ENCODE measurements at regions of chr6 and their contacts with region 1.

Region 1: DNA sequence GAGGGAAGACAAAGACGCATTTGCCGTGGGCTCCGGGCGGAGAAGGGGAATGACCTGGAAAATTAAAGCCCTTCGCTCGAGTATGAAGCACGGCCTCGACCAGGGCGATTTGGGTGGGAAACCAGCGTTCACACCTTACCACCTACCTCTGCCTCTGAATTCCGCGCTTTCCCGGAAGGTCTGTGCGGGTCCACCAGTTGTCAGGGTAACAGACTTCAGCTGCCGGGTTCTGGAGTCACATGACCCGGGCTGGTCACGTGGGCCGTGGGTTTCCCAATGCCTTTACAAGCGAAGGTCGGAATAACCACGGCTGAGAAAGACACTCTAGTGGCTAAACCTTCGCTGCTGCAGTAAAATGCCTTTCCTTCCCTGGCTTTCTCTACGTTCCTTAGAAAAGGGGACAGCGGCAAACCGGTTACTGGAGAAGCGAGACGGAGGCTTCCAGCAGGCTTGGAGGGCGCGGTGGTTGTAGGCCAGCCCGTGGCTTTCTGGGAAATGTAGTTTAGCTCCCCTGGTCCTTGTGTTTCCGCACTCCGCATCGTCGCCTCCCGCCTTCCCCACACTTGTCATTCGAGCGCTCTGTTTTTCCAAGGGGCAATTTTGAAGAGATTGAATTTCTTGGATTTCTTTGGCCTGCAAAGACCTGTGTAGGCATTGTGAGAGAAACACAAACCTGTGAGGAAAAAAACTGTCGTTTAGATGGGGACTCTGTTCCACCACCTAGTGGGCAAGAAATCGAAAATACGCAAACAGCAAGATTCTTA is at the start of gene CEP162:
- DNase-seq: peak; percentile 81 to 92 (median 91)
- ATAC-seq: peak; percentile 93
- H3K4me3 ChIP-seq: peak within 1 kb of the TSS; percentile 90
- H3K4me3 Mint-ChIP-seq: peak within 1 kb of the TSS; percentile 89 to 100 (median 96)
- H3K27ac ChIP-seq: peak within 1 kb of the TSS; percentile 76
- H3K27ac Mint-ChIP-seq: peak within 1 kb of the TSS; percentile 77 to 96 (median 90)
- H3K4me1 ChIP-seq: peaks cover 0 to 8% of the 10 kb centered on the region in 2 donors
- H3K4me1 Mint-ChIP-seq: peaks cover 5 to 40% (median 23%) of the 10 kb centered on the region in 7 donors
- H3K27me3 ChIP-seq: no peaks in the 10 kb centered on the region
- H3K27me3 Mint-ChIP-seq: peaks cover 2 to 17% (median 13%) of the 10 kb centered on the region in 5 donors
- total RNA-seq, gene CEP162: 4.4 to 10.7 (median 9.2) TPM

Region 2: GRCh38 chr6:82247634-82248232 is 1979.9 kb before region 1 on chr6 and contains the start of gene IBTK:
- CTCF ChIA-PET with region 1: interaction called, 3 read pairs
- POLR2A ChIA-PET with region 1: no interaction called
- intact Hi-C with region 1: loop called (anchors 2 kb)
- DNase-seq: peak; percentile 86 to 97 (median 92)
- ATAC-seq: peak; percentile 97
- H3K4me3 ChIP-seq: peak within 1 kb of the TSS; percentile 87
- H3K4me3 Mint-ChIP-seq: peak within 1 kb of the TSS; percentile 92 to 99 (median 98)
- H3K27ac ChIP-seq: peak within 1 kb of the TSS; percentile 85
- H3K27ac Mint-ChIP-seq: peak within 1 kb of the TSS; percentile 93 to 99 (median 97)
- H3K4me1 ChIP-seq: peaks cover 12 to 15% of the 10 kb centered on the region in 2 donors
- H3K4me1 Mint-ChIP-seq: peaks cover 20 to 51% (median 42%) of the 10 kb centered on the region in 7 donors
- H3K27me3 ChIP-seq: no peaks in the 10 kb centered on the region
- H3K27me3 Mint-ChIP-seq: no peaks in the 10 kb centered on the region
- total RNA-seq, gene IBTK: 16.6 to 35.8 (median 26.1) TPM

Region 3: DNA sequence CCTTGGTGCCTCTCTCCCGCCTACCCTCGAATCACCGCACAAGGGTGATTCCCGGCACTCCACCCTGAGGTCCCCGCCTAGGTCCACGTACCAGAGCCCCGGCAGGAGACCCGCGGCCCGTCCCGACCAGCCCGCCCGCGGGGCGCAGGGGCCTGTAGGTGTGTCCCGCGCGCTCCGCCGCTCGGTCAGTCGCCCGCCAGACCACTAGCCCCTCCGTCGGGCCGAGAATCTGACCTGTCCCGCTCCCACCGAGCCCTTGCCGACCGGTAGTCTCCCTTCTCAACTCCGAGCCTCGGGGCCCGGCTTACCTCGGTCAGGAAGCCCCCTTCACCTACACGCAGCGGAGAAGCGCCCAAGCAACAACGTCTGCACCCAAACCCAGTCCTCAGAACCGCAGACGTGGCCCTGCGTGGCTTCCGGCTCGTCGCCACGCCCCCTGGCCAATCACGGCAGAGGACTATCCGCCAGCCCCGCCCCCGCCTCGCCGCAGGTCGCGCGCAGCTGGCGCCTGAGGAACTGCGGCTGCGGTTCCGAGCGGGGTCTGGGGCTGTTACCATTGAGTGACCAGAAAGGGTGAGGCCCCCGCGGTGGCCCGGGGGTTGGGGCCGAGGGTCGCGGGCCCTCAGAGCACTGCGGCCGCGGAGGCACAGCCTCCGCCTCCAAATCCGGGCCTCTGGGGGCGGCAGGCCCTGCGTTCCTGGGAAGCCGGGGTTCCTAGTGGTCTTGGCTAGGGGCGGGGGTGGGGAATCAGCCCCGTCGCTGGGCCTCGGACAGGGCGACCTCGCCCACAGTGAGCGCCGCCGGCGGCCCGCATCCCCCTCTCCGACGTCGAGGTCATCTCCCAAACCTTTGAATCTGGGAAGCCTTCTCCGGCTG is 1034.5 kb before region 1 on chr6 and contains the starts of genes PGM3 and RWDD2A:
- CTCF ChIA-PET with region 1: no interaction called
- POLR2A ChIA-PET with region 1: no interaction called
- intact Hi-C with region 1: loop called (anchors 1 to 10 kb)
- DNase-seq: peak; percentile 84 to 90 (median 88)
- ATAC-seq: peak; percentile 99
- H3K4me3 ChIP-seq: peak within 1 kb of the TSS; percentile 93
- H3K4me3 Mint-ChIP-seq: peak within 1 kb of the TSS; percentile 92 to 99 (median 98)
- H3K27ac ChIP-seq: peak within 1 kb of the TSS; percentile 91
- H3K27ac Mint-ChIP-seq: peak within 1 kb of the TSS; percentile 89 to 99 (median 97)
- H3K4me1 ChIP-seq: peaks cover 5 to 12% of the 10 kb centered on the region in 2 donors
- H3K4me1 Mint-ChIP-seq: peaks cover 24 to 68% (median 63%) of the 10 kb centered on the region in 7 donors
- H3K27me3 ChIP-seq: no peaks in the 10 kb centered on the region
- H3K27me3 Mint-ChIP-seq: peaks cover 0 to 6% (median 0%) of the 10 kb centered on the region in 5 donors
- total RNA-seq, gene PGM3: 22.0 to 37.3 (median 27.6) TPM
- total RNA-seq, gene RWDD2A: 1.8 to 6.4 (median 2.7) TPM

Region 4: DNA sequence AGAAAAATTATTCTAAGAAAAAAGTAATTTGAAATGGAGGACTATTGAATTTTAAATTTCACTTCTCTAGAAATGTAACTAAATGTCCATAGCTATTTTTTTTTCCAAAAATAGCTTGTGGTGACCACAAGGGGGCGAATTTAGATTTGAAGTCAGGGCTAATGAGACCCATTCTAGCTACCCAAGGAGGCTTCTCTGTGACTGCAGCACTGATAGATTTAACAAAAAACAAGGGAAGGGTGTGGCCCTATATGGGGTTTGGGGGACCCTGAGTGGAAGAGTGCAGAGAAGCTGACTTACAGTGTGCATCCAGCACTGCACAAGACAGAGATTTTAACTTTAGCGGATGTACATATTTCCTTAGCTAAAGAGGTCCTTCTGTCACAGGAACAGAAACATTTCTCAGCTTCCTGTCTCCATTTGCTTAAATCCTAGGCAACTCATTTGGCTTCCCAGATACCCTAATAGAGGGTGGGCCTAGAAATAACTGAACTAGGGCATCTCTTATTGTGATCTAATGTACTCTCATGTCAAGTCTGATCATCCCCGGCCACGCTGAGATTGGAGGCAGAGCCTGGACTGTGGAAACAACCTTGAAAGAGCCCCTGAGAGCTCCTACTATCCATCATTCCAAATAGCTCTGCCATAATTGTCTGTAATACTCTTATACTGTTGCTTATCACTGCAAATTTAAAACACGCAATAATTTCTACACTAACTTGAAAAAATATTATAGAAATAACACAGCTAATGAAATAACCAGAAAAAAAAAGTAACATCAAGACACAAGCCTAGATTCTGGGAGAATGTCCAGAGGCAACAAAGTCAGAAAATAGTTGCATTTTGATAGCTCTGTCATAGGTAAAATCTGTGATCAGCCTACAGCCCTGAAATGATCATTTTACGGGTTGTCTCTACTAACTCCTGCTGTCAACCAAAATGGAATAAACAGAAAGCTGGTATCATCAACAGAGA is 612.3 kb before region 1 on chr6:
- CTCF ChIA-PET with region 1: no interaction called
- POLR2A ChIA-PET with region 1: no interaction called
- intact Hi-C with region 1: loop called in 1 of 2 experiments (anchors 5 kb)
- DNase-seq: peak in 1 of 9 donors; percentile 2
- ATAC-seq: no peak
- H3K4me3 ChIP-seq: no peak overlapping the region
- H3K4me3 Mint-ChIP-seq: no peak overlapping the region
- H3K27ac ChIP-seq: no peak overlapping the region
- H3K27ac Mint-ChIP-seq: no peak overlapping the region
- H3K4me1 ChIP-seq: no peaks in the 10 kb centered on the region
- H3K4me1 Mint-ChIP-seq: no peaks in the 10 kb centered on the region
- H3K27me3 ChIP-seq: no peaks in the 10 kb centered on the region
- H3K27me3 Mint-ChIP-seq: peaks cover 0 to 6% (median 0%) of the 10 kb centered on the region in 5 donors

Region 5: DNA sequence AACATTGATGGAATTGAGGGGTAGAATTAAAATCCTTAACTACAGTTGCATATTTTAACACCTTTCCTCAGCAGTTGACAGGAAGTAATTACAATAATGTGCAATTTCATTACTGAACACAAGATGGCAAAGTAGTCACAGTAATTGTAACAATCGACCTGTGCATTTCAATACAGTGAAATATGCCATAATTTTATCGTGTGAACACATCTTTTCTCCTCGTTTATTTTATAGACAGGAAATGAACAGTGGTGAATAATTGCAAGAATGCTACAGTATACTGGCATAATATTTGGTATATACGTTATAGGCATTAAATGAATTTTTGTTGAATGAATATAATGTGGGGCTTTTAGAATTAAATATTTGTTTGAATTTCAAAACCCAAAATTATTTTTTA is 343.1 kb before region 1 on chr6:
- CTCF ChIA-PET with region 1: interaction called, 12 read pairs
- POLR2A ChIA-PET with region 1: no interaction called
- intact Hi-C with region 1: loop called (anchors 1 kb)
- DNase-seq: peak in 6 of 9 donors; percentile 17 to 54 (median 44)
- ATAC-seq: peak; percentile 77
- H3K4me3 ChIP-seq: no peak overlapping the region
- H3K4me3 Mint-ChIP-seq: no peak overlapping the region
- H3K27ac ChIP-seq: no peak overlapping the region
- H3K27ac Mint-ChIP-seq: no peak overlapping the region
- H3K4me1 ChIP-seq: no peaks in the 10 kb centered on the region
- H3K4me1 Mint-ChIP-seq: peaks cover 7 to 55% (median 28%) of the 10 kb centered on the region in 7 donors
- H3K27me3 ChIP-seq: no peaks in the 10 kb centered on the region
- H3K27me3 Mint-ChIP-seq: no peaks in the 10 kb centered on the region

Region 6: DNA sequence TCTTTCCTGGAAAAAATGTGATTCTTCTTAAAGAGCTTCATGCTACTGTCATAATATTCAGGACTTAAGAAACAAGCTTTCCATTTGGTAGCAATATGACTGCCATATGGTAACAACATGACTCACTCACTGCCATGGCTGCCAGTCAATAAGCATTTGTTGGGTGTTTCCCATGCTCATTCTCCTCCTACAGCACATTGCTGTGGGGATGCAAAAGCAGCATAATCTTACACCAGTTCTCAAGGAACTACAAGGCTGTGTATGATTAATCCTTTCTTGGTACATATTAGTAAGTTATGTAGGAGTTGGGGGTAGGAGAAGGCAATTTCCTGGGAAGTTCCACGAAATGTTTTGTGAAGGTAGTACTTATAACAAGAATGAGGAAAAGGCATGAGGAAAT is 76.9 kb before region 1 on chr6:
- CTCF ChIA-PET with region 1: no interaction called
- POLR2A ChIA-PET with region 1: no interaction called
- intact Hi-C with region 1: no loop called
- DNase-seq: no peak
- ATAC-seq: no peak
- H3K4me3 ChIP-seq: no peak overlapping the region
- H3K4me3 Mint-ChIP-seq: no peak overlapping the region
- H3K27ac ChIP-seq: no peak overlapping the region
- H3K27ac Mint-ChIP-seq: no peak overlapping the region
- H3K4me1 ChIP-seq: no peaks in the 10 kb centered on the region
- H3K4me1 Mint-ChIP-seq: peaks cover 0 to 2% (median 0%) of the 10 kb centered on the region in 7 donors
- H3K27me3 ChIP-seq: no peaks in the 10 kb centered on the region
- H3K27me3 Mint-ChIP-seq: no peaks in the 10 kb centered on the region

Region 7: GRCh38 chr6:84193114-84193708 is 34.4 kb before region 1 on chr6:
- CTCF ChIA-PET with region 1: no interaction called
- POLR2A ChIA-PET with region 1: no interaction called
- intact Hi-C with region 1: no loop called
- DNase-seq: no peak
- ATAC-seq: no peak
- H3K4me3 ChIP-seq: no peak overlapping the region
- H3K4me3 Mint-ChIP-seq: no peak overlapping the region
- H3K27ac ChIP-seq: no peak overlapping the region
- H3K27ac Mint-ChIP-seq: no peak overlapping the region
- H3K4me1 ChIP-seq: no peaks in the 10 kb centered on the region
- H3K4me1 Mint-ChIP-seq: peaks cover 0 to 2% (median 0%) of the 10 kb centered on the region in 7 donors
- H3K27me3 ChIP-seq: no peaks in the 10 kb centered on the region
- H3K27me3 Mint-ChIP-seq: no peaks in the 10 kb centered on the region

Region 8: DNA sequence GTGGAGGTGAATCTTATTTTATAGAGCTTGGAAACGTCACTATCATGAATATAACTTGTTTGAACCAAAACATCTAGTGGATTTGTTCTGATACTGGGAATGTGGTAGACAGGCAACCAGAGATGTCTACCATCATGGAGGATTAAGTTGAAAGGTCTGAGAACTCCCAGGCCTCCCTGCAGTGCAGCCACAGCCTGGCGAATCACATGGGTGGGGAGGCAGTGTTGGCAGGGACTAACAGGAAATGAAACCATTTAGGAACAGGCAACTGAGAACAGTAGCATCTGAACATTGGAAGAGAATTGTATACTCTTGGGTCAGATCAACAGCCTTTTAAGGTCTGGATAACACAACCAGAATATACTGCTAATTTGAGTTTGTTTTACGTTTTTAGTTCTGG is 22.1 kb after region 1 on chr6:
- CTCF ChIA-PET with region 1: no interaction called
- POLR2A ChIA-PET with region 1: no interaction called
- intact Hi-C with region 1: no loop called
- DNase-seq: no peak
- ATAC-seq: no peak
- H3K4me3 ChIP-seq: no peak overlapping the region
- H3K4me3 Mint-ChIP-seq: no peak overlapping the region
- H3K27ac ChIP-seq: no peak overlapping the region
- H3K27ac Mint-ChIP-seq: no peak overlapping the region
- H3K4me1 ChIP-seq: no peaks in the 10 kb centered on the region
- H3K4me1 Mint-ChIP-seq: no peaks in the 10 kb centered on the region
- H3K27me3 ChIP-seq: no peaks in the 10 kb centered on the region
- H3K27me3 Mint-ChIP-seq: peaks cover 4 to 30% (median 26%) of the 10 kb centered on the region in 5 donors

Region 9: GRCh38 chr6:85678602-85679444 is 1451.2 kb after region 1 on chr6:
- CTCF ChIA-PET with region 1: no interaction called
- POLR2A ChIA-PET with region 1: interaction called, 4 read pairs
- intact Hi-C with region 1: loop called in 1 of 2 experiments (anchors 2 kb)
- DNase-seq: peak; percentile 97 to 99 (median 98)
- ATAC-seq: peak; percentile 96
- H3K4me3 ChIP-seq: peak overlapping the region; percentile 98
- H3K4me3 Mint-ChIP-seq: peak overlapping the region; percentile 93 to 100 (median 98)
- H3K27ac ChIP-seq: peak overlapping the region; percentile 93
- H3K27ac Mint-ChIP-seq: peak overlapping the region; percentile 96 to 100 (median 99)
- H3K4me1 ChIP-seq: peaks cover 23 to 26% of the 10 kb centered on the region in 2 donors
- H3K4me1 Mint-ChIP-seq: peaks cover 26 to 51% (median 40%) of the 10 kb centered on the region in 7 donors
- H3K27me3 ChIP-seq: no peaks in the 10 kb centered on the region
- H3K27me3 Mint-ChIP-seq: peaks cover 0 to 4% (median 0%) of the 10 kb centered on the region in 5 donors